ENCODE measurements at regions of chr4 and their contacts with region 1.

Region 1: DNA sequence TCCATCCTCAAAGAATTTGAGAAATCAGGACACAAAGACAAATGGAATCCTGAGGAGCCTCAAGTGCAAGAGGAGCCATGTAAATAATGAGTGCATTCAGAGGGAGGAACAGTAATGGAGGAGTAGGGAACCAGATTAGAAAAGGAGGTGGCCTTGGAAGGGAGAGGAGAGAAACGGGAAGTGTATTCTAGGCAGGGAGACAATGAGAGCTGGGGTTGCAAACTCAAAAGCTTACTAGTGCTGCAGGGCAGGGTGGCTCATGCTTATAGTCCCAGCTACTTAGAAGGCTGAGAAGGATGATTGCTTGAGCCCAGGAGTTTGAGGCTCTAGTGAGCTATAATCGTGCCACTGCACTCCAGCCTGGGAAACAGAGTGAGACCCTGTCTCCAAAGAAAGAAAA is 113.2 kb upstream of the LSM6 start:
- DNase-seq: no peak
- H3K4me3 ChIP-seq: no peak overlapping the region
- H3K27ac ChIP-seq: no peak overlapping the region
- H3K4me1 ChIP-seq: no peaks in the 10 kb centered on the region
- H3K27me3 ChIP-seq: no peaks in the 10 kb centered on the region
- CTCF ChIP-seq: no peak

Region 2: DNA sequence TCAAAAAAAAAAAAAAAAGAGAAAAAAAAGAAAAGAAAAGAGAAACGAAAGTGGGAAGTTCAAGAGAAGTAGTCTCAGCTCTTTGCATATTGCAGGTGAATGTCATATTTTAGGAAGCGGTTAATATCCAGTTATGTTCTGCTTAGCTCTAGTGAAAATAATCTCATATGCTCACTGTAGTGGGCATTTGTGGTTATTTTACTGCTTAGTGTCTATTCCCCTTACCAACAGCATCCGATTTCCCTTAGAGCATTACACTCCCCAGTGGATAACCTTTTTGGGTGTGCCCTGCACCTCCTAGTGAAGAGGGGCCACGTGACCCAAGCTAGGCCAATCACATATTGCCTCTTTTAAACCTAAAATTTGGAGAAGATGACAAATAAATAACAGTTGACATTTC is 12.5 kb before region 1 on chr4:
- CTCF ChIA-PET with region 1: no interaction called
- POLR2A ChIA-PET with region 1: no interaction called
- intact Hi-C with region 1: loop called (anchors 1 kb)
- DNase-seq: no peak
- H3K4me3 ChIP-seq: no peak overlapping the region
- H3K27ac ChIP-seq: no peak overlapping the region
- H3K4me1 ChIP-seq: 0 out of 2 replicates have a peak, but pooled peaks cover 4% of the 10 kb centered on the region
- H3K27me3 ChIP-seq: no peaks in the 10 kb centered on the region
- CTCF ChIP-seq: no peak

Measured in PC-9 (cell line).